HepG2 (cell line): ENCODE measurements at regions of chr16 and their contacts with region 1.

Region 1: GRCh38 chr16:81035398-81035974 is at the start of gene ATMIN:
- DNase-seq: peak; percentile 83
- ATAC-seq: peak; percentile 91
- H3K4me3 ChIP-seq: peak within 1 kb of the TSS; percentile 87 to 93 (median 87)
- H3K27ac ChIP-seq: peak within 1 kb of the TSS; percentile 60
- H3K4me1 ChIP-seq: peaks cover 22% of the 10 kb centered on the region
- H3K27me3 ChIP-seq: no peaks in the 10 kb centered on the region; a peak in 1 of 5 replicates
- CTCF ChIP-seq: peak; percentile 90
- EP300 ChIP-seq: peak in 1 of 2 experiments; percentile 52; a peak in 1 of 4 replicates
- POLR2A ChIP-seq: peak in 1 of 2 experiments; percentile 68; a peak in 2 of 4 replicates
- RAD21 ChIP-seq: peak; percentile 96
- total RNA-seq, gene ATMIN: 60.4 and 74.7 TPM in 2 replicates

Region 2: GRCh38 chr16:80924372-80924978 is 111.0 kb before region 1 on chr16:
- CTCF ChIA-PET with region 1: interaction called, 15 read pairs
- POLR2A ChIA-PET with region 1: no interaction called
- in situ Hi-C with region 1: no loop called
- intact Hi-C with region 1: no loop called
- DNase-seq: peak; percentile 54
- ATAC-seq: peak; percentile 96
- H3K4me3 ChIP-seq: no peak overlapping the region
- H3K27ac ChIP-seq: no peak overlapping the region
- H3K4me1 ChIP-seq: no peaks in the 10 kb centered on the region
- H3K27me3 ChIP-seq: no peaks in the 10 kb centered on the region
- CTCF ChIP-seq: peak; percentile 96
- EP300 ChIP-seq: no peak
- POLR2A ChIP-seq: no peak
- RAD21 ChIP-seq: peak; percentile 72

Region 3: DNA sequence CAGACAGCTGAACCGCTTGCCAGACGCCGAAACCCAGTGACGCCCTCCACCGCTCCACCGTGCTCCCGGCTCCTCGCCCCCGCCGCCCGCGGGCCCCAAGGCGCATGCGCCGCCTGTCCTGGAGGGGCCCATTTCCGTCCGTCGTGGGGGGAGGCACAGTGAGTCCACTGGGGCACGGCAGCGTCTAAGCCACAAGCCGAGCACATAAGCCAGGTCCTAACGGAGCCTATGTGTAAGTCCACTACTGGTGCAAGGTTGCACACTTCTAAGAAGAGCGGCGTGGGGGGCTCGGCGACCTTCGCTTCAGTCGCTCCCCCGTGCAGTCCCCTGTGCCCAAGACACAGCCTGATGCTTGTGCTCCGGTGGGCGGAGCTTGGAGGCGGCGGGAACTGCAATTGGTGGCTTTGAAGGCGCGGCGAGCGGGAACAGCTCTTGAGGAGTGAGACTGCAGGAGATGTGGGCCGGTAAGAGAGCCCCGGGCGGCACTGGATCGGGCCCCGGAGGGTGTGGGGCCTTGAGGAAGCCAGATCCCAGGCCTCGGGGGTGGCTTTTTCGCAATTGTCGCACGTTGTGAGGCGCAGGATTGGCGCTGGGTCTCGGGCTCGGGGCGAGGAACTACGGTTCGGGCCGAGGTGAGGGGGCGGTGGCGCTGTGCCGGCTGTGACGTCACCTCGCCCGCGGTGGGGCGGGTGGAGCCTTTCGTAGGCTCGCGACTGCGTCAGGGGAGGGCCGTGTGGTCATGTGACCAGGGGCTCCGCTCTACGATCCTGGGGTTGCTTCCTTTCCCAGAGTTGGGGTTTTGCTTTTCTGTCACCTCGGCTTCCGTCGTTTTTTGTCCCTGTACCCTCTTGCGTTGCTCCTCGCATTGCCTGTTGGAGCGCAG is 28.4 kb before region 1 on chr16 and contains the starts of genes CENPN and CMC2:
- CTCF ChIA-PET with region 1: interaction called, 26 read pairs
- POLR2A ChIA-PET with region 1: no interaction called
- in situ Hi-C with region 1: no loop called
- intact Hi-C with region 1: loop called (anchors 1 kb)
- DNase-seq: peak; percentile 98
- ATAC-seq: peak; percentile 91
- H3K4me3 ChIP-seq: peak within 1 kb of the TSS; percentile 90 to 99 (median 90)
- H3K27ac ChIP-seq: peak within 1 kb of the TSS; percentile 99
- H3K4me1 ChIP-seq: peaks cover 35% of the 10 kb centered on the region
- H3K27me3 ChIP-seq: no peaks in the 10 kb centered on the region; a peak in 1 of 5 replicates
- CTCF ChIP-seq: peak; percentile 47; the same call in 1 of the 2 replicates
- EP300 ChIP-seq: peak in 1 of 2 experiments; percentile 4; a peak in 1 of 4 replicates
- POLR2A ChIP-seq: peak; percentile 76 to 80
- RAD21 ChIP-seq: no peak; the same call in 1 of the 2 replicates
- total RNA-seq, gene CENPN: 129 and 193 TPM in 2 replicates
- total RNA-seq, gene CMC2: 129 and 147 TPM in 2 replicates

Region 4: DNA sequence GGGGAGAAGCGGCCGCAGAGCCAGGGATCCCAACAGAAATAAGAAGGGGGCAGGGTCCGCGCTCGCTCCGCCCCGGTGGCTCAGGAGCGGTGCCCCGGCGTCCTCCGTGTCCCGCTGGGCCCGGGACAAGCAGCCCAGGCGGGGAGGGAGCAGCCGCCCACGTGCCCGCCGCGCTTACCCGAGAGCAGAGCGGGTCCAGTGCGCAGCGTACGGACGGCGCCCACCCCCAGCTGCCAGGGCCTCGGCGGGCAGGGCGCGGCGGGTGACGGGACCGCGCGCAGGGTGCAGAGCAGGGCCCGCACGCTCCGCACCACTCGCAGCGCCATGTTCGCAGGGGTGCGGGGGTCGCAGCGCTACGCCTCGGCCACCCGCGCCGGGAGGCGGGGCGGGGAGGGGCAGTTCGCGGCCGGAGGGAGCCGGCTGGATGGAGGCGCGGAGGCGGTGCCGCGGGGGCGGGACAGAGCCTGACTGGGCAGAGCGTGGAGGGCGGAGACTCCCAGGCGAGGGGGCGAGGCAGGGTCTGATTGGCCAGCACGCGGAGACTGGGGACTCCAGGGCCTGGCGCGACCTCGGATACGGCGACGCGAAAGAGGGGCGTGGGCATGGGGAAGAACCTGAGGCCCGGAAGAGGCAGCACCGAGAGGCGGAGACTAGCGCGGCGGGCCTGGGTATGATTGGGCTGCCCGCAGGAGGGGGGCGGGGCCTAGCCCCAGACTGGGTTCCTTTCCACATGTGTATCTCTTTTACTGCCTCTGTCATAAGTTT is 60.6 kb after region 1 on chr16 and contains the start of gene GCSH:
- CTCF ChIA-PET with region 1: no interaction called
- POLR2A ChIA-PET with region 1: no interaction called
- in situ Hi-C with region 1: no loop called
- intact Hi-C with region 1: loop called (anchors 5 kb)
- DNase-seq: peak; percentile 98
- ATAC-seq: peak; percentile 98
- H3K4me3 ChIP-seq: peak within 1 kb of the TSS; percentile 75 to 86 (median 83)
- H3K27ac ChIP-seq: peak within 1 kb of the TSS; percentile 88
- H3K4me1 ChIP-seq: peaks cover 52% of the 10 kb centered on the region
- H3K27me3 ChIP-seq: no peaks in the 10 kb centered on the region; a peak in 1 of 5 replicates
- CTCF ChIP-seq: no peak; the same call in 1 of the 2 replicates
- EP300 ChIP-seq: no peak
- POLR2A ChIP-seq: peak; percentile 67 to 82; a peak in 3 of 4 replicates
- RAD21 ChIP-seq: peak; percentile 66
- total RNA-seq, gene GCSH: 103 and 117 TPM in 2 replicates

Region 5: DNA sequence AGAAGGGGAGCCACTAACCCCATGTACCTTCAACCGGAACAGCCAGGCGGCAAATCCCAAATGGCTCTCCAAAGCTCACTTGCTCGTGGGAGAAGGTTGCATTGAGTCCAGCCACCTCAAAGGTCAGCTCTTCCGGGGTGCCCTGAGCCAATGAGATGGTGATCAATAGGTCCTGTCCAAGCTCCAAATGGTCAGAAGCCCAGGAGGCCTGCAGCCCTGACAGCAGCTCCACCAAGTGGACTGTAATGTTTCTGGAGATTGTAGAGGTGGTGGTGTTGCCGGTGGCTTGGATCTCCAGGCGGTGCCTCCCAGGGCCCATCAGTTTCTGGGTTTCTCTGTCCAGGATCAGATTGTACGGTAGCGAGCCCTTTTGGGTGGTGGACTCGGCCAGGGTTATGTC is 163.1 kb after region 1 on chr16:
- CTCF ChIA-PET with region 1: interaction called, 14 read pairs
- POLR2A ChIA-PET with region 1: interaction called, 5 read pairs
- in situ Hi-C with region 1: no loop called
- intact Hi-C with region 1: loop called (anchors 1 kb)
- DNase-seq: peak; percentile 59
- ATAC-seq: peak; percentile 98
- H3K4me3 ChIP-seq: peak overlapping the region in 1 of 3 experiments; percentile 35; a peak in 1 of 6 replicates
- H3K27ac ChIP-seq: no peak overlapping the region
- H3K4me1 ChIP-seq: no peaks in the 10 kb centered on the region
- H3K27me3 ChIP-seq: peaks cover 2 to 61% of the 10 kb centered on the region in 2 experiments; a peak in 3 of 5 replicates
- CTCF ChIP-seq: peak; percentile 91
- EP300 ChIP-seq: 0 out of 4 replicates have a peak, but pooled peaks of 1 of the 2 experiments have one; percentile 6
- POLR2A ChIP-seq: no peak
- RAD21 ChIP-seq: peak; percentile 85